ENCODE measurements at regions of chr9 and their contacts with region 1.

Region 1: GRCh38 chr9:128702445-128702948 is at the start of gene PKN3:
- DNase-seq: peak; percentile 80 to 90 (median 90)
- H3K4me3 ChIP-seq: peak within 1 kb of the TSS; percentile 65 to 94 (median 81)
- H3K27ac ChIP-seq: peak within 1 kb of the TSS in 1 of 2 experiments; percentile 58
- H3K4me1 ChIP-seq: peaks cover 0 to 18% (median 11%) of the 10 kb centered on the region in 4 experiments
- H3K27me3 ChIP-seq: no peaks in the 10 kb centered on the region

Region 2: DNA sequence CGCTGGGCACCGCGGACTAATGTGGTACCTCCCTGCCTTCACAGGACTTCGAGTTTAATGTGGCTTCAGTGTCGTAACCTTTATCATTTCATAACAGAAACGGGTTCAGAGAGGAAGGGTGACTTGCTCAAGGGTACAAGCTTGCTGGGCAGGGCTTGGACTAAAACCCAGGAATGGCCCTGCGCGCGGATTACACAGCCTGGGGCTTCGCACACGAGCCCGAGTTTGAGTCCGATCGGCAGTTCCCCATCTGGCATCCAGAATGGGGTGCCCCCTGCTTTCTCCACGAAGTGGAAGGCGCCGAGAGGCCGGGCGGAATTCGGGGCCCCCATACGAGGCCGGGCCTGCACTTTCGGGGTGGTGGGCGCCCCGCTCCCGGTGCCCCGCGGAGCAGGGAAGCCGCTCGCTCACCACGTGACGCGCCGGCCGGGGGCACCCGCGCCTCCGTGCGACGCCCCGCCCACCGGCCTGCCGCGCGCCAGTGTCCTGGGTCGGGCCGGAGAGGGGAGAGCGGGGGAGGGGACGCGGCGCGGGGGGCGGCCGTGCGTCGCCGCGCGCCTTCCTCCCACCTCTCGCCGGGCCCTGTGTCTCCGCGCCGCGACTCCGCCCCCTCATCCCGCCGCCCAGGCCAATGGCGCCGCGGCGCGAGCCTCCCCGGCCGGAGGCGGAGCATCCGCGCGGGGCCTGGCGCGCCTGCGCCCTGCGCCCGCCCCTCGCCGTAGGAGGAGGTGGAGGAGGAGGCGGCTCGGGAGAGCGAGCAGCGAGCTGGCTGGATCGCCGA is 13.8 kb before region 1 on chr9 and contains the start of gene SET:
- CTCF ChIA-PET with region 1: interaction called, 14 read pairs
- POLR2A ChIA-PET with region 1: interaction called, 3 read pairs
- DNase-seq: peak; percentile 91 to 96 (median 96)
- H3K4me3 ChIP-seq: peak within 1 kb of the TSS; percentile 69 to 100 (median 85)
- H3K27ac ChIP-seq: peak within 1 kb of the TSS; percentile 69 to 89
- H3K4me1 ChIP-seq: peaks cover 21 to 62% (median 56%) of the 10 kb centered on the region in 4 experiments
- H3K27me3 ChIP-seq: no peaks in the 10 kb centered on the region